Heart right ventricle (tissue), 16 donors: ENCODE measurements at regions of chr9 and their contacts with region 1.

Region 1: DNA sequence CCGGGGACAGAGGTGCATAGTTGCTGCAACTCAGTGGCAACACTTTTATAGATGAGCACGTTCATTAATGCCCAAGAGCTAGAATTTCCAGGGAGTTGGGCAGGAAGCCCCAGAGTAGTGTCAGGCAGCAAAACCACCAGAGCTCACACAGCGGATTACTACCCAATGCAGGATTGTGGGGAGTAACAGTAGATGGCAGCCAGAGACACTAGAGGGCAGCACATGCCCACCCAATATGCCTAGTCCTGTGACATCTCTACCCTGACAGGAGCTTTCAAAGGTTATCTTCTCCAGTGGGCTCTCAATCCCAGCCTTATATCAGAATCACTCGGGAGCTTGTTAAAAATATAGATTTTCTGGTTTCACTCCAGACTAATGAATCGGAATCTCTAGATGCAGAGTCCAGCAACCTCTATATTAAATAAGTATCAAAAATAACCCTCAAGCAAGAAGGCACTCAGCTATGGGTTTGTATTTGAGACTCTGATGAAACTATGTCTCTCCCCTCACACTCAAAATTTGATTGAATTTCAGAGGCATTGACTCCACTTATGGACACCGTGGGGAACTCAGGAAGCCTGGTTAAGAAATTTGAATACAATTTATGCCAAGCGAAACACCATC is 58.4 kb upstream of the PHF24 start:
- DNase-seq: peak; percentile 71 to 76
- ATAC-seq: peak; percentile 97 to 100 (median 98)
- H3K4me3 ChIP-seq: no peak overlapping the region
- H3K27ac ChIP-seq: no peak overlapping the region
- H3K4me1 ChIP-seq: no peaks in the 10 kb centered on the region
- H3K27me3 ChIP-seq: peaks cover 0 to 37% (median 25%) of the 10 kb centered on the region in 7 donors
- CTCF ChIP-seq: peak; percentile 49 to 91 (median 87)

Region 2: DNA sequence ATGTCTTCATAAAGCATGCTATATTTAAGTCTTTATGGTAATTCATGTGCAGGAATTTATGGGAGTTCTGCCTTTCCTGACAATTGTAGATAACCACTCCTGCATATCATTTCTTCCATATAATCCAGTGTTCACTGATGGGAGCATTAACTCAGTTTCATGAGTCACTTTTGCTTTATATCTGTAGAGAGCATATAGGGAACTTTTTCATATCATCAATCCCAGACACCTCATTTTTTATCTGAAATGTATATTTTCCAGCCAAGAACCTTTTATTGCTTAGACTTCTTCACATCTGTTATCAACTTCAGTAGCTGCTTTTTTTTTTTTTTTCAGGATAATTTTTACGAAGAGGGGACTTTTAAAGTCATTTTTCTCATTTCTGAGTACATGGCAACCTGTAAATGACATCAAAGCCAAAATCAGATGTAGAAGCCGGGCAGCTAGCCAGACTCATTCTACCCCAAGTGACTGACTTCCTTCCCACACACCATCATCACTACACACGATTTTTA is 1568.2 kb before region 1 on chr9:
- intact Hi-C with region 1: no loop called
- DNase-seq: no peak
- ATAC-seq: no peak
- H3K4me3 ChIP-seq: no peak overlapping the region
- H3K27ac ChIP-seq: no peak overlapping the region
- H3K4me1 ChIP-seq: peaks cover 0 to 21% (median 10%) of the 10 kb centered on the region in 9 donors
- H3K27me3 ChIP-seq: no peaks in the 10 kb centered on the region
- CTCF ChIP-seq: no peak

Region 3: GRCh38 chr9:34984049-34984448 is 84.4 kb after region 1 on chr9:
- intact Hi-C with region 1: loop called (anchors 1 to 5 kb)
- DNase-seq: no peak
- ATAC-seq: no peak
- H3K4me3 ChIP-seq: no peak overlapping the region
- H3K27ac ChIP-seq: peak overlapping the region in 1 of 10 donors; percentile 55
- H3K4me1 ChIP-seq: peaks cover 0 to 42% (median 6%) of the 10 kb centered on the region in 9 donors
- H3K27me3 ChIP-seq: no peaks in the 10 kb centered on the region
- CTCF ChIP-seq: no peak

Region 4: DNA sequence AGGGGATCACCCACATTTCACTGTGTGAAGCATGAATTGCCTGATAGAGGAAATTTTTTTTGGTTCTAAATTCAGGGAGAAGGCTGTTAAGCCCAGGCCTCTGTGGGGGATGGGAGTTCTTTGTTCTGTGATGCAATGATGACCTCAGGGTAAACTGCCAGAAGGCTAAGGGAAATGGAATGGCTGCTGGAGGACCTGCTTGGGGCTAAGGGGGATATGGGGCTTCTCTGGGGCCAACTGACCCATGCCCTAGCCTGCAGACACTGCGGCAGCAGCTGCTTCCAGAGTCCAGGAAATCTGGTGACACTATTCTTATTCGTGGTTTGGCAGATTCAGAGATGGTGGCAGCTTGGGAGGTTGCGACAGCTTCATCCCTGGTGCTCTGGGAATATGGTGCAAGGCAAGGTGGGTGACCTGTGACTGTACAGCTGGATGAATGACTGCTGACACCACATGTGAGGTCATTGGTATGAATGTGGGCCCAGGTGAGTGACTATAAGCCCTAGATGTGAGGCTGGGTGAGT is 142.5 kb after region 1 on chr9:
- intact Hi-C with region 1: loop called in 2 of 10 experiments (anchors 10 kb)
- DNase-seq: no peak
- ATAC-seq: peak in 1 of 8 donors; percentile 14
- H3K4me3 ChIP-seq: no peak overlapping the region
- H3K27ac ChIP-seq: no peak overlapping the region
- H3K4me1 ChIP-seq: peaks cover 0 to 6% (median 0%) of the 10 kb centered on the region in 9 donors
- H3K27me3 ChIP-seq: no peaks in the 10 kb centered on the region
- CTCF ChIP-seq: no peak

Region 5: GRCh38 chr9:35096035-35096849 is 196.6 kb after region 1 on chr9 and contains the start of gene PIGO:
- intact Hi-C with region 1: loop called (anchors 2 to 10 kb)
- DNase-seq: peak; percentile 85 to 89
- ATAC-seq: peak; percentile 91 to 98 (median 96)
- H3K4me3 ChIP-seq: peak within 1 kb of the TSS; percentile 36 to 98 (median 84)
- H3K27ac ChIP-seq: peak within 1 kb of the TSS; percentile 70 to 99 (median 96)
- H3K4me1 ChIP-seq: peaks cover 0 to 18% (median 8%) of the 10 kb centered on the region in 9 donors
- H3K27me3 ChIP-seq: no peaks in the 10 kb centered on the region
- CTCF ChIP-seq: peak; percentile 63 to 81 (median 73)
- total RNA-seq, gene PIGO: 8.2 to 12.3 (median 9.9) TPM

Region 6: GRCh38 chr9:35481347-35481975 is 581.8 kb after region 1 on chr9:
- intact Hi-C with region 1: loop called in 4 of 10 experiments (anchors 5 kb)
- DNase-seq: peak in 1 of 2 donors; percentile 51
- ATAC-seq: peak in 4 of 8 donors; percentile 57 to 65 (median 60)
- H3K4me3 ChIP-seq: no peak overlapping the region
- H3K27ac ChIP-seq: no peak overlapping the region
- H3K4me1 ChIP-seq: peaks cover 0 to 6% (median 0%) of the 10 kb centered on the region in 9 donors
- H3K27me3 ChIP-seq: no peaks in the 10 kb centered on the region
- CTCF ChIP-seq: peak; percentile 26 to 72 (median 67)